Activated CD4-positive, alpha-beta T cell treated with anti-CD3 and anti-CD28 coated beads, Interleukin-2, amount 10 ng/mL, durations not matched to agents 7 days and 5 days (primary cell): ENCODE measurements at regions of chr20 and their contacts with region 1.

Region 1: GRCh38 chr20:45971675-45972499 is at the start of gene ZNF335:
- DNase-seq: peak; percentile 93
- H3K4me3 Mint-ChIP-seq: peak within 1 kb of the TSS; percentile 82
- H3K27ac Mint-ChIP-seq: peak within 1 kb of the TSS; percentile 100
- H3K4me1 Mint-ChIP-seq: peaks cover 23% of the 10 kb centered on the region
- H3K27me3 Mint-ChIP-seq: peaks cover 6% of the 10 kb centered on the region
- total RNA-seq, gene ZNF335: 40.4 to 41.2 TPM

Region 2: DNA sequence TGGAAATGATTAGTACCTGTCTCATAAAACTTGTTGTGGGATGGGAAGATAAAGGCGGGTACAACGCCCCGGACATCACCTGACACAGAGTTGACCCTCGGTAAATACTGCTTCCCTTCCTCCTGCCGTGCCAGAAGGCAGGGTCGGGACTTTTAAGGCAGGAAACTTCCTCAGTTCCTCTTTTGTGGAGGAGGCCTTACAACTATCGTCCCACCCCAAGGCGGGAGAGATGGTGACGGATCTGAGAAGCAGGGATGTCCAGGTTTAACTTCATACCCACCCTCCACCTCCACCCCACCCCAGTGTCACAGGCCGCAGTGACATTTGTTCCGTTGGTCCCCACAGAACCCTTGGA is 179.6 kb before region 1 on chr20:
- CTCF ChIA-PET with region 1: interaction called, 12 read pairs
- POLR2A ChIA-PET with region 1: no interaction called
- DNase-seq: peak; percentile 17
- H3K4me3 Mint-ChIP-seq: peak overlapping the region; percentile 80
- H3K27ac Mint-ChIP-seq: peak overlapping the region; percentile 90
- H3K4me1 Mint-ChIP-seq: peaks cover 20% of the 10 kb centered on the region
- H3K27me3 Mint-ChIP-seq: no peaks in the 10 kb centered on the region

Region 3: GRCh38 chr20:45823949-45824835 is 147.7 kb before region 1 on chr20:
- CTCF ChIA-PET with region 1: interaction called, 18 read pairs
- POLR2A ChIA-PET with region 1: no interaction called
- DNase-seq: peak; percentile 64
- H3K4me3 Mint-ChIP-seq: peak overlapping the region; percentile 60
- H3K27ac Mint-ChIP-seq: peak overlapping the region; percentile 51
- H3K4me1 Mint-ChIP-seq: peaks cover 19% of the 10 kb centered on the region
- H3K27me3 Mint-ChIP-seq: peaks cover 29% of the 10 kb centered on the region

Region 4: DNA sequence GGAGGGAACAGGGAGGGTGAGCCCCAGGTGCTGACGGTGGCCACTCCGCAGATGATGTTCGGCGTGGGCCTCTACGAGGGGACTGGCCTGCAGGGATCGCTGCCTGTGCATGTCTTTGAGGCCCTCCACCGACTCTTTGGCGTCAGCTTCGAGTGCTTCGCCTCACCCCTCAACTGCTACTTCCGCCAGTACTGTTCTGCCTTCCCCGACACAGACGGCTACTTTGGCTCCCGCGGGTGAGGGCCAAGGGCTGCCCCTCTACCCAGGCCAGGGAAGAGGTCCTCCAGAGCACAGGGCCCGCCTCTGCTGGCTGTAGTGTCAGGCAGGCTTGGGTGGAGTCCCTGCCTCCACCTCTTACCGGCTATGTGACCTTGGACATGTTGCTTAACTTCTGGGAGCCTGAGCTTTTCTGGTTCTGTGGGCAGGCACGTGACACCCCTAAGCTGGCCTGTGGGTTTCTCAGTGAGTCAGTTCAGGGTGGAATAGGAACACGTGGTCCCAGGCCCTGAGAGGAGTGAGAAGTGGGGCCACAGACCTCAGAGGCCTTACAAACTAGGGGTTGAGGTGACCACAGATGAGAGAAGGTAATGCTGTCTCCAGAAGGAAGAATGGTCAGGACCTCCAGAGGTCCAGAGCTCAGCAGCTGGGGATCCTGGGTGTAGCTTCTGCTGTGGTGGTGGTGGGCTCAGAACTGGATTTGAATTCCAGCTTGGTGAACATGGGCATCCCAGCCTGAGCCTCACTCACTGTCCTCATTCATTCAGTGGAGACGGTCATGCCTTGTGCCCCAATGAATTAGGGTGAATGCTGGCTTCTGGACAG is 25.5 kb before region 1 on chr20:
- CTCF ChIA-PET with region 1: interaction called, 16 read pairs
- POLR2A ChIA-PET with region 1: no interaction called
- DNase-seq: peak; percentile 27
- H3K4me3 Mint-ChIP-seq: no peak overlapping the region
- H3K27ac Mint-ChIP-seq: peak overlapping the region; percentile 73
- H3K4me1 Mint-ChIP-seq: peaks cover 9% of the 10 kb centered on the region
- H3K27me3 Mint-ChIP-seq: no peaks in the 10 kb centered on the region

Region 5: DNA sequence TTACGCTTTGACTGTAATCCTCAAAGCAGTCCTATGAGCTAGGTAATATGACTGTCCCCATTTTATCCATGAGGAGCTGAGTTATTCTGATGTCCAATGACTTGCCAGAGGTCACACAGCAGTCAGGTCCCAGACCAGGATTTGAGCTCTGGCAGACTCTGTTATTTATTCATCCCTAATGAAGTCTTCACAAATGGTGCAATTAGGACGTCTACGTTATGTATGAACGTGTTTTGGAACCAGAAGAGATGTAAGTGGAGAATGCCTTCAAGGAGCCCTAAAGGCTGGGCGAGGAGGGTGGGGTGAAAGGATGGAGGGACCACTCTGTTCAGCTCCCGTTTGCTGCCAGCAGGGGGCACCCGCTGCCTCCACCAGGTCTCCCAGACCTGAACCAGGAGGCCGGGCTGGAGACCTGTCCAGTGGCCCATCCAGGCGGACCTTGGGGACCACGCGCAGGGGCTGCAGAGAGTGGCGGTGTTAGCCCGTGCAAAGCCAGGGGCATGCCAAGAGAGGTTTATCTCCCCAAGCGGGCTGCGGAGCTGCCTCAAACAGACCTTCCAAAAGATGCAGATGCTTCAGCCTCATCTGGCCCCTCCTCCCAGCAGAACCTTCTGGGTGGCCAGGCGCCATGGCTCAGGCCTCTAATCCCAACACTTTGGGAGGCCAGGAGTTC is 15.4 kb after region 1 on chr20:
- CTCF ChIA-PET with region 1: interaction called, 13 read pairs
- POLR2A ChIA-PET with region 1: no interaction called
- DNase-seq: peak; percentile 79
- H3K4me3 Mint-ChIP-seq: no peak overlapping the region
- H3K27ac Mint-ChIP-seq: no peak overlapping the region
- H3K4me1 Mint-ChIP-seq: peaks cover 10% of the 10 kb centered on the region
- H3K27me3 Mint-ChIP-seq: peaks cover 24% of the 10 kb centered on the region

Region 6: GRCh38 chr20:46022411-46023147 is 50.7 kb after region 1 on chr20:
- CTCF ChIA-PET with region 1: no interaction called
- POLR2A ChIA-PET with region 1: no interaction called
- DNase-seq: peak; percentile 77
- H3K4me3 Mint-ChIP-seq: peak overlapping the region; percentile 57
- H3K27ac Mint-ChIP-seq: no peak overlapping the region
- H3K4me1 Mint-ChIP-seq: peaks cover 22% of the 10 kb centered on the region
- H3K27me3 Mint-ChIP-seq: peaks cover 35% of the 10 kb centered on the region

Region 7: GRCh38 chr20:46206025-46206424 is 234.1 kb after region 1 on chr20:
- CTCF ChIA-PET with region 1: no interaction called
- POLR2A ChIA-PET with region 1: no interaction called
- DNase-seq: no peak
- H3K4me3 Mint-ChIP-seq: no peak overlapping the region
- H3K27ac Mint-ChIP-seq: no peak overlapping the region
- H3K4me1 Mint-ChIP-seq: peaks cover 13% of the 10 kb centered on the region
- H3K27me3 Mint-ChIP-seq: peaks cover 16% of the 10 kb centered on the region